Natural killer cell (primary cell): ENCODE measurements at regions of chr1 and their contacts with region 1.

Region 1: GRCh38 chr1:152189657-152190442 is 30.8 kb upstream of the RPTN start:
- DNase-seq: peak; percentile 45 to 83
- ATAC-seq: peak; percentile 64 to 73 (median 68)
- H3K4me3 ChIP-seq: peak overlapping the region; percentile 72
- H3K4me3 Mint-ChIP-seq: peak overlapping the region; percentile 84
- H3K27ac ChIP-seq: no peak overlapping the region
- H3K27ac Mint-ChIP-seq: peak overlapping the region in 1 of 2 donors; percentile 81
- H3K4me1 ChIP-seq: peaks cover 15% of the 10 kb centered on the region
- H3K4me1 Mint-ChIP-seq: peaks cover 6 to 14% of the 10 kb centered on the region in 2 donors
- H3K27me3 ChIP-seq: no peaks in the 10 kb centered on the region
- H3K27me3 Mint-ChIP-seq: peaks cover 0 to 9% of the 10 kb centered on the region in 2 donors
- CTCF ChIP-seq: peak; percentile 81

Region 2: GRCh38 chr1:152110860-152111514 is 78.9 kb before region 1 on chr1:
- intact Hi-C with region 1: no loop called
- DNase-seq: peak in 1 of 2 donors; percentile 51
- ATAC-seq: peak in 1 of 3 donors; percentile 29
- H3K4me3 ChIP-seq: peak overlapping the region; percentile 28
- H3K4me3 Mint-ChIP-seq: no peak overlapping the region
- H3K27ac ChIP-seq: no peak overlapping the region
- H3K27ac Mint-ChIP-seq: no peak overlapping the region
- H3K4me1 ChIP-seq: peaks cover 39% of the 10 kb centered on the region
- H3K4me1 Mint-ChIP-seq: no peaks in the 10 kb centered on the region
- H3K27me3 ChIP-seq: peaks cover 60% of the 10 kb centered on the region
- H3K27me3 Mint-ChIP-seq: peaks cover 1 to 21% of the 10 kb centered on the region in 2 donors
- CTCF ChIP-seq: no peak

Region 3: DNA sequence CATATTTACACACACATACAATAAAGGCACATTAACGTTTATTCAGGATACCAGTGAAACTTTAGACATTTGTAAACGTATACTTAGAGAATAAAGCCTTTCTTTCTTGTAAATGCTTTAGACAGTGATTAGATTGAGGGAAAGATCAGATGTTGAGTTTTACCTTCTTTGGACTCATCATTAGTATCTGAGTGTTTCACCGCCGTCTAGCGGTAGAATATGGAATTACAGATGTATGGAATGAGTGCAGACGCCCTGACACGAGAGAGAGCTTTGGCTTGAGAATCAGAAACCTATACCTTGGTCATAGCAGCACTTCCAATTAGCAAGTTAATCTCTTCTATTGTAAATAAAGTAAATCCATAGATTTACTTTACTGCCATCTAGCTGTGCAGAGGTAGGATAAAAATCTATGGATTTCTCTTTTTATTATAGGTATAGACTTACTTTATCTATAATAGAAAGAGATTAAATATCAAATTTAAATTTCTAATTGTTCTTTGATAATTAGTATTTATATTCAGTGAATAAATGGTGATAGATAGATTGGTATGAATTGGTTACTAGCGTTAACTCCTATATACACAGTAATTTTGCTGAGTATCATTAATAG is 157.4 kb after region 1 on chr1:
- intact Hi-C with region 1: loop called (anchors 2 kb)
- DNase-seq: peak in 1 of 2 donors; percentile 80
- ATAC-seq: peak; percentile 66 to 80 (median 76)
- H3K4me3 ChIP-seq: no peak overlapping the region
- H3K4me3 Mint-ChIP-seq: no peak overlapping the region
- H3K27ac ChIP-seq: no peak overlapping the region
- H3K27ac Mint-ChIP-seq: no peak overlapping the region
- H3K4me1 ChIP-seq: no peaks in the 10 kb centered on the region
- H3K4me1 Mint-ChIP-seq: no peaks in the 10 kb centered on the region
- H3K27me3 ChIP-seq: peaks cover 10% of the 10 kb centered on the region
- H3K27me3 Mint-ChIP-seq: peaks cover 6 to 45% of the 10 kb centered on the region in 2 donors
- CTCF ChIP-seq: peak; percentile 96

Region 4: DNA sequence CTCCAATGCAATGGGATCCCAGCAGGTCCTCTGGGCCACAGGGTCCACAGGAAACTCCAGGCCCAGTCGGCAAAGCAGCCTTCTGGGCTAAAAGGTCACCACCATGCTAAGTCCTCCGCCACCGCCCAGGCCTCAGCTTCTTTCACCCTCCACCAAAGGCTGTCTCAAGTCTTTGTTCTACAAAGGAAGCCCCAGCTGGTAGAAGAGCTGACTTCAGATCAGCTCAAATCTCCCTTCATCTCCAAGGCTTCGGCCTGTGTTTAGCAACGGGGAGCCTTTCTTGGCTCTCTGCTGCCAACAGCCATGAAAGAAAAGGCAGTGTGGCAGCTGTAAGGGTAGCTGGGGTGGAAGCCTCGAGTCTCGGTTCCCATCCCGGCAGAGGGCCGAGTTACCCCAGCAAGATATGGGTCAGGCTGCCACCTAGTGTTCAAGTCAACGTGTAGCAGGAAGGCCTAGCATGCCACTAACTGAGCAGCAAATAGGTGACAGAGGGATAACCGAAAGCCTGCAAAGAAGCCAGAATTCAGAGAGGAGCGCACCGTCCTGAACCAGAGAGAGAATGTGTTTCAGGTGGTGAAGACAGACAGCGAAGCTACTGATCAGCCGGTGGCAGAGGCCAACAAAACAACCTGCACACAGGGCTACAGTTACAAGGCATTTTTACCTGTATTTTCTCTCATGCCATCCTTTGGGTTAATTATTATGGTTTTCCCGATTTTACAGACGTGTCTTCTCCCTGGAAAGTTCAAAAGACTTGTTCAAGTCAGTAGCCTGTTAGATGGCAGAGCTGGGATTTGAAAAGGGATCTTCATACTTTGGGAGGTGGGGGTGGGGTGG is 251.0 kb after region 1 on chr1:
- intact Hi-C with region 1: loop called (anchors 5 kb)
- DNase-seq: peak; percentile 47 to 85
- ATAC-seq: peak; percentile 87 to 100 (median 99)
- H3K4me3 ChIP-seq: no peak overlapping the region
- H3K4me3 Mint-ChIP-seq: no peak overlapping the region
- H3K27ac ChIP-seq: no peak overlapping the region
- H3K27ac Mint-ChIP-seq: no peak overlapping the region
- H3K4me1 ChIP-seq: peaks cover 5% of the 10 kb centered on the region
- H3K4me1 Mint-ChIP-seq: no peaks in the 10 kb centered on the region
- H3K27me3 ChIP-seq: peaks cover 5% of the 10 kb centered on the region
- H3K27me3 Mint-ChIP-seq: peaks cover 29 to 35% of the 10 kb centered on the region in 2 donors
- CTCF ChIP-seq: peak; percentile 85

Region 5: GRCh38 chr1:152459596-152460528 is 270.0 kb after region 1 on chr1:
- intact Hi-C with region 1: loop called (anchors 1 kb)
- DNase-seq: peak; percentile 67 to 89
- ATAC-seq: peak; percentile 71 to 75 (median 74)
- H3K4me3 ChIP-seq: no peak overlapping the region
- H3K4me3 Mint-ChIP-seq: peak overlapping the region; percentile 83
- H3K27ac ChIP-seq: peak overlapping the region; percentile 71
- H3K27ac Mint-ChIP-seq: peak overlapping the region; percentile 94 to 95
- H3K4me1 ChIP-seq: peaks cover 13% of the 10 kb centered on the region
- H3K4me1 Mint-ChIP-seq: peaks cover 26 to 33% of the 10 kb centered on the region in 2 donors
- H3K27me3 ChIP-seq: no peaks in the 10 kb centered on the region
- H3K27me3 Mint-ChIP-seq: peaks cover 3 to 5% of the 10 kb centered on the region in 2 donors
- CTCF ChIP-seq: peak; percentile 80